ENCODE measurements at regions of chr12 and their contacts with region 1.

Region 1: DNA sequence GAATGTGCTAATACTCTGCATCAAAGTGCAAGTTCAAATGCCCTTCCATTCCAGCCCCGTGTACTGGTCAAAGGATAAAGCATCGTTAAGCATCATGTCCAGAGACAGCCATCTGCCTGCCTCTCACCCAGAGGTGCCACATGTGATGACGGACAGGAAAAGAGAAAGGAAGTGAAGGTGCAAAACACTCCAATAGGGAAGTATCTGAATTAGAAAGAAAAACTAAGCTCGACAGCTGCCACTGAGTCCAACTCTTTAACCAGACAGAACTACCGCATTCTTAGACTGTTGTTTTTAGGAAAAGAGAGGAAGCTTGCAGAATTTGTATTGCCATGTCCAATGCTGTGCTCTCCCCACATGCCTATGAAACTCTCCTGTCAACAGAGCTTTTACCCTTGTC is 465.0 kb upstream of the SOX5 start:
- DNase-seq: no peak
- ATAC-seq: peak; percentile 36
- H3K4me3 Mint-ChIP-seq: peak overlapping the region; percentile 80
- H3K27ac Mint-ChIP-seq: peak overlapping the region; percentile 89
- H3K4me1 Mint-ChIP-seq: peaks cover 61% of the 10 kb centered on the region
- H3K27me3 Mint-ChIP-seq: no peaks in the 10 kb centered on the region
- CTCF ChIP-seq: no peak

Region 2: DNA sequence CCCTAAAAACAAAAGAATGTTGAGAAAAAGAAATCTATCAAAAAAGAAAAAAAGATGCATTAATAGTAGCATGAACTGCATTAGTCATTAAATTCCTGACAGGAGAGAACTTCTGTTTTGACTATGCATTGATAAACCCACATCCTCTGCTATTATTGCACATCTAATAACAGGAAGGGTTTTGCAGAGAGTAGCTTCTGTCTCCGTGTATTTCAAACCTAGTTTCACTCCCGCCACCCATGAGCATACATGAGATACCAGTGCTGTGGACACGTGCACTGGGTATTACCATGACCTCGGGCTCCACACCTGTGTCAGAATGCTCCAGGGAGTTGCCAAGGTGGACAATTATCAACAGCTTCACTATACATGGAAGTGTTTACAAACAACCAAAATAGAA is 15.9 kb before region 1 on chr12:
- CTCF ChIA-PET with region 1: interaction called, 4 read pairs
- POLR2A ChIA-PET with region 1: interaction called, 18 read pairs
- intact Hi-C with region 1: loop called (anchors 2 kb)
- DNase-seq: no peak
- ATAC-seq: peak; percentile 89
- H3K4me3 Mint-ChIP-seq: peak overlapping the region; percentile 68
- H3K27ac Mint-ChIP-seq: peak overlapping the region; percentile 57
- H3K4me1 Mint-ChIP-seq: peaks cover 18% of the 10 kb centered on the region
- H3K27me3 Mint-ChIP-seq: no peaks in the 10 kb centered on the region
- CTCF ChIP-seq: no peak

Region 3: DNA sequence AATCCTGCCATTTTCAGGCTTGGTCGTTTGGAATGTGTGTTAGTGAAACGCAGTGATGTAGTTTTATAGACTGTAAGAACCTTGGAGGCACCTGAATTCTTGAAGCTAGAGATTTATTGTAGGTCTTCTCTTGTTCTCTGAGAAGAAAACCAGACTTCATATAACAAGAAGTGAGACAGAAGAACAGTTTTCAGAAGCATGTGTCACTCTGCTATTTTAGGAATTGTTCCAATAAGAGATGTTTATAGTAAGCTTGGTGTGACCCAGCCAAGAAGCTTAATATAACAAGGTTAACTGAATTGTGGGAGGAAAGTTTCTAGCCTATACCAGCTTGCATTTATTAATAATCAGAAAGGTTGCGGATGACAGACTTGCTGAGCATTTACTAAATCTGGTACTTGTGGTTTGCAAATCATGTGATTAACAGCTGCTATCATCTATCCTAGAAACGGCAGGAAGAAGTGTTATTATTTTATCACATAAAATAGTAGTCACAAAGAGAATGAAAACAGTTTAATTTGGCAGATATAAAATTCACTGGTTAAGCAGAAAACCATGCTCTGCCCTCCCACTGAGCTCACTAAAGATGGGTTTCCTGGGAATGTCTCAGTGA is 583.6 kb after region 1 on chr12:
- CTCF ChIA-PET with region 1: no interaction called
- POLR2A ChIA-PET with region 1: no interaction called
- intact Hi-C with region 1: no loop called
- DNase-seq: no peak
- ATAC-seq: peak; percentile 74
- H3K4me3 Mint-ChIP-seq: peak overlapping the region; percentile 69
- H3K27ac Mint-ChIP-seq: peak overlapping the region; percentile 97
- H3K4me1 Mint-ChIP-seq: peaks cover 90% of the 10 kb centered on the region
- H3K27me3 Mint-ChIP-seq: no peaks in the 10 kb centered on the region
- CTCF ChIP-seq: no peak

Measured in activated B cell treated with CpG ODN at 0.5 μM for 24 hours (primary cell).